Heart right ventricle (tissue), 16 donors: ENCODE measurements at regions of chr20 and their contacts with region 1.

Region 1: GRCh38 chr20:6583134-6583738 is 184.2 kb upstream of the BMP2 start:
- DNase-seq: peak; percentile 28 to 47
- ATAC-seq: peak in 7 of 8 donors; percentile 49 to 84 (median 70)
- H3K4me3 ChIP-seq: no peak overlapping the region
- H3K27ac ChIP-seq: no peak overlapping the region
- H3K4me1 ChIP-seq: no peaks in the 10 kb centered on the region
- H3K27me3 ChIP-seq: no peaks in the 10 kb centered on the region
- CTCF ChIP-seq: peak; percentile 16 to 73 (median 67)

Region 2: GRCh38 chr20:6819605-6820004 is 236.4 kb after region 1 on chr20:
- intact Hi-C with region 1: loop called in 1 of 10 experiments (anchors 10 kb)
- DNase-seq: no peak
- ATAC-seq: no peak
- H3K4me3 ChIP-seq: no peak overlapping the region
- H3K27ac ChIP-seq: no peak overlapping the region
- H3K4me1 ChIP-seq: no peaks in the 10 kb centered on the region
- H3K27me3 ChIP-seq: peaks cover 0 to 40% (median 8%) of the 10 kb centered on the region in 7 donors
- CTCF ChIP-seq: peak in 6 of 9 donors; percentile 14 to 38 (median 26)